Heart right ventricle (tissue), 16 donors: ENCODE measurements at regions of chr12 and their contacts with region 1.

Region 1: GRCh38 chr12:10364815-10365622 is 24.8 kb downstream of the KLRK1 start:
- DNase-seq: peak; percentile 22 to 76
- ATAC-seq: peak; percentile 83 to 93 (median 86)
- H3K4me3 ChIP-seq: peak overlapping the region; percentile 44 to 96 (median 71)
- H3K27ac ChIP-seq: peak overlapping the region; percentile 78 to 97 (median 94)
- H3K4me1 ChIP-seq: peaks cover 0 to 54% (median 27%) of the 10 kb centered on the region in 9 donors
- H3K27me3 ChIP-seq: no peaks in the 10 kb centered on the region
- CTCF ChIP-seq: no peak

Region 2: DNA sequence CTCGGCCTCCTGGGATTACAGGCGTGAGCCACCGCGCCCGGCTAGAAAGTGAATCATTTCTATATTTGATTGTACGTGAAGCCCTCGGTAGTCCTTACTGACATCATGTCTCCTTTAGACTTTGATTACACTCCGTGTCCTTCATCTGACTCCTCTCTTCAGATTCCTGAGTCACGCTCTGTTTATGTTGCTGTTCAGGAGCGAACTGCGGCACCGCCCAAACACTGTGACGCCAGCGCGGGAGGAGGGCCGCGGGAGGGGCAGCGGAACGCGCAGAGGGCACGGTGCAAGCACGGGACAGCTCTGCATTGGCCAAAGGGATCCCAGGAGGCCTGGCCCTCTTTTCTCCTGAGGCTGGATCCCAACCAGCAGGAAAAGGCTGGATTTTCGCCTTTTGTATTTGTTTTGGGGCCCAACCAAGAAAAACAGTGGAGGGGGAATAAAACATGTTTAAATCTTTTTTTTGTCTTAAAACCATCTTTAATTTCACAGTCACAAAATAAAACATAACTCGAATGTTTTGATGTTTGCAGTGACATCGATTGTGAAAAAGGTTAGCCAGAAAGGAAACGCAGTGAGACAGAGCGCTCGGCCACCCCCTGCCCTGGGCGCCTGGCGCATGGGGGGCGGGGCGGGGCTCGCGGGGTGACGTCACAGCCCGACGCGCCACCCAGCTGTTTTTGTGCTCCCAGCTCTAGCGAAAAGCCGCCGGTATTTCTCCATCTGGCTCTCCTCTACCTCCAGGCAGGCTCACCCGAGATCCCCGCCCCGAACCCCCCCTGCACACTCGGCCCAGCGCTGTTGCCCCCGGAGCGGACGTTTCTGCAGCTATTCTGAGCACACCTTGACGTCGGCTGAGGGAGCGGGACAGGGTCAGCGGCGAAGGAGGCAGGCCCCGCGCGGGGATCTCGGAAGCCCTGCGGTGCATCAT is 152.6 kb before region 1 on chr12 and contains the start of gene GABARAPL1:
- intact Hi-C with region 1: loop called in 1 of 10 experiments (anchors 5 kb)
- DNase-seq: peak; percentile 97 to 98
- ATAC-seq: peak; percentile 92 to 98 (median 94)
- H3K4me3 ChIP-seq: peak within 1 kb of the TSS; percentile 64 to 93 (median 83)
- H3K27ac ChIP-seq: peak within 1 kb of the TSS; percentile 95 to 100 (median 99)
- H3K4me1 ChIP-seq: peaks cover 0 to 41% (median 26%) of the 10 kb centered on the region in 9 donors
- H3K27me3 ChIP-seq: no peaks in the 10 kb centered on the region
- CTCF ChIP-seq: peak in 1 of 9 donors; percentile 9
- total RNA-seq, gene GABARAPL1: 285 to 512 (median 413) TPM

Region 3: DNA sequence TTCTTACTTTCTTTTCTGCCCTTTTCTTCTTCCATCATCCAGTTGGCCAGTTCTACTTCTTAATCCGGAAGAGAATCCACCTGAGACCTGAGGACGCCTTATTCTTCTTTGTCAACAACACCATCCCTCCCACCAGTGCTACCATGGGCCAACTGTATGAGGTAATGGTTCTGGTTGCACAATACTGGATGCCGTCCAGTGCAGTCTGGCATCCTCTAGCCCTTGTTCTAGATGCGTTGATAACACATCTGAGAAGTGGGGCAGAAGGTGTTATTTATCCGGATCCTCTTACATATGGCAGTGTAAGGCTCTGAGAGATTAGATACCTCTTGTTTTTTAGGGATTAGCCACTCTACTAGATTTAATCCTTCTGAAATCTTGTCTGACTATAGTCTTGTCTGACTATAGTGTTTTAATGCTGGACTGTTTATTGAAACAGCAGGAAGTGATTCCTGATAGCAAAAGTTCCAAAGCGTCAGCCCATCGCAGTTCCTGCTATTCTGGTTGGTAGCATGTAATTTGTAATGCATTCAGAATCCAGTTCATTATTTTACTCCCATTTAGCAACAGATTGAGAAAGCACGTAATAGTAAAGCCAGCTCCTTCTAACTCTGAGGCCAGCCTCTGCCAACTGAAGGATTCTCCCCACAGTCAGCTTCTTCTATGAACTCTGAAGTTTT is 144.5 kb before region 1 on chr12:
- intact Hi-C with region 1: loop called in 1 of 10 experiments (anchors 10 kb)
- DNase-seq: peak; percentile 67 to 83
- ATAC-seq: peak; percentile 86 to 96 (median 94)
- H3K4me3 ChIP-seq: peak overlapping the region in 1 of 10 donors; percentile 6
- H3K27ac ChIP-seq: peak overlapping the region; percentile 31 to 100 (median 68)
- H3K4me1 ChIP-seq: peaks cover 5 to 62% (median 43%) of the 10 kb centered on the region in 9 donors
- H3K27me3 ChIP-seq: no peaks in the 10 kb centered on the region
- CTCF ChIP-seq: no peak

Region 4: GRCh38 chr12:10235761-10236631 is 129.0 kb before region 1 on chr12:
- intact Hi-C with region 1: loop called in 1 of 10 experiments (anchors 10 kb)
- DNase-seq: no peak
- ATAC-seq: peak in 7 of 8 donors; percentile 52 to 83 (median 82)
- H3K4me3 ChIP-seq: no peak overlapping the region
- H3K27ac ChIP-seq: no peak overlapping the region
- H3K4me1 ChIP-seq: no peaks in the 10 kb centered on the region
- H3K27me3 ChIP-seq: no peaks in the 10 kb centered on the region
- CTCF ChIP-seq: peak; percentile 77 to 93 (median 88)

Region 5: GRCh38 chr12:10721651-10722501 is 356.9 kb after region 1 on chr12:
- intact Hi-C with region 1: loop called in 1 of 10 experiments (anchors 10 kb)
- DNase-seq: peak; percentile 82 to 94
- ATAC-seq: peak; percentile 86 to 96 (median 92)
- H3K4me3 ChIP-seq: peak overlapping the region; percentile 73 to 95 (median 92)
- H3K27ac ChIP-seq: peak overlapping the region; percentile 93 to 100 (median 98)
- H3K4me1 ChIP-seq: peaks cover 16 to 57% (median 54%) of the 10 kb centered on the region in 9 donors
- H3K27me3 ChIP-seq: peaks cover 0 to 18% (median 0%) of the 10 kb centered on the region in 7 donors
- CTCF ChIP-seq: no peak